ENCODE measurements at regions of chr5 and their contacts with region 1.

Region 1: DNA sequence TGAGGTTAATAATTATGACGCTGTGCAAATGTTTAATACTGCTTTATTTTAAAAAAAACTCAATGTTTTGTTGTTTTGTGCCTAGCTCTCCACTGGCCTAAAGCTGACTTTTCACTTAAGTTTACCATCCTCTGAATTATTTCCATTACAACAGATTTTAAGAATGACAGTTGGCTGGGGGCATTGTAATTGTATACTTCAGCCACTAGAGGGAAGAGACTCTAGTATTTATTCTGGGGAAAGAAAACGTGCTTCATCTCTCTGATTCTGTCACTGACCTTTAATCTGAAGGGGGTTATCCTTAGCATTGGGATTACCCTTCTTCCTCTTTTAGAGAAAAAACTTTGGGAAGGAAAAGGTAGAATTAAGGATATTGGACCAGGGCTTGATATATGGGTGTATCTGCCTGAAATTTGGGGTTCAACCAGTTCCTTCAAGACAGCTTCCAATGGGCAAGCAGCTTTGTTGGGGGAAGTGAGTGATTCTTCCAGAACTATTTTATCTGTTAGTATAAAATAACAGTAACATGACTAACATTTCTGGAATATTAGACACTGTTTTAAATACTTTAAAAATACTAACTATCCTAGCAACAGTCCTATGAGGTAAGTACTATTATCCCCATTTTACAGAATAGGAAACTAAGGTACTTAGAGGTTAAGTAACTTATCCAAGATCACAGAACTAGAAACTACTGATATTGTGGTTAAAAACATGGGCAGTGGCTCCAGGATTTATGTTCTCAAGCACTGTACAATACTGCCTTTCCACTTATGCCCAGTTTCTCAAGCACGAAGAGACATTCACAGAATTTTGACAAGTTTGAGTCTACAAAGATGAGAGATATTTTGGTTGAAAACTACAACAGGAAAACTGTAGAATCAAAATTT is 208.4 kb downstream of the CD180 start:
- DNase-seq: peak; percentile 53
- H3K4me3 ChIP-seq: no peak overlapping the region
- H3K27ac ChIP-seq: no peak overlapping the region
- H3K4me1 ChIP-seq: no peaks in the 10 kb centered on the region
- H3K27me3 ChIP-seq: no peaks in the 10 kb centered on the region
- CTCF ChIP-seq: peak; percentile 54 to 61
- POLR2A ChIP-seq: no peak

Region 2: GRCh38 chr5:66807743-66808142 is 180.5 kb before region 1 on chr5:
- CTCF ChIA-PET with region 1: interaction called, 4 read pairs
- POLR2A ChIA-PET with region 1: no interaction called
- dilution Hi-C with region 1: no loop called
- intact Hi-C with region 1: loop called (anchors 5 kb)
- DNase-seq: peak; percentile 75
- H3K4me3 ChIP-seq: no peak overlapping the region
- H3K27ac ChIP-seq: no peak overlapping the region
- H3K4me1 ChIP-seq: no peaks in the 10 kb centered on the region
- H3K27me3 ChIP-seq: peaks cover 9 to 10% of the 10 kb centered on the region in 2 experiments
- CTCF ChIP-seq: peak; percentile 62 to 69
- POLR2A ChIP-seq: no peak

Region 3: DNA sequence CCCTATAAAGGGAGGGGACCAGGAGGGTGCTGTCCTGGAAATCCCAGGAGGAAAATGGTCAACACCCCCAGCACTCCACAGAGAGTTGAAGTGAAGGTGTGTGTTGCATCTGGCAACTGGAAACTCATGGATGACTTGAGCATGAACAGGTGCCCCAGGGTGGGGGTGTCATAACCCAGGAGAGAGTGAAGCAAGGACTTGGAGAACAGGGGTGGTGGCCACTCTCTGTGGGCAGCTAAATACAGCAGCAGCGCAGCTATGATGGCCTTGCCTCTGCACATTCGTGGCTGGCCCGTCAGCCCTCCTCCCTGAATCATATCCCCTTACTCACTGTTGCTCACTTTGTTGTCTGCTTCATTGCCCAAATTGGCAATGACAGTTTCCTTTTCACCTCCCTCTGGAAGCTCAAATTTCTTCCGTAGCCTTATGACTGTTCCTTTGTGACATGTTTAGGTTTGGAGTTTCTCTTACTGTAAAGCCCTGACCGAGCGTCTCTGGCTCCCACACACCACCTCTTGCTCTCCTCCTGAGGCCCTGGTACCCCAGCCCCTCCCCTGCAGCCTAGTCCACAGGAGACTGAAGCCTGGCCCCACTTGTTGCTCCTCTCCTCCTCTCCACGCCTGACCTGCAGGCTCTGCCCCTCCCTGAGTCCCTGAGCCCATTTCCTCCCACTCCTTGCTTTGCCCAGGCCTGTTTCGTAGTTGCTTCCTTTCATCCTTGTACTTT is 22.7 kb after region 1 on chr5:
- CTCF ChIA-PET with region 1: interaction called, 15 read pairs
- POLR2A ChIA-PET with region 1: no interaction called
- dilution Hi-C with region 1: no loop called
- intact Hi-C with region 1: no loop called
- DNase-seq: peak; percentile 96
- H3K4me3 ChIP-seq: peak overlapping the region in 1 of 3 experiments; percentile 1
- H3K27ac ChIP-seq: peak overlapping the region; percentile 96
- H3K4me1 ChIP-seq: peaks cover 88% of the 10 kb centered on the region
- H3K27me3 ChIP-seq: no peaks in the 10 kb centered on the region
- CTCF ChIP-seq: no peak
- POLR2A ChIP-seq: peak; percentile 94

Region 4: GRCh38 chr5:67065237-67065636 is 77.0 kb after region 1 on chr5:
- CTCF ChIA-PET with region 1: interaction called, 12 read pairs
- POLR2A ChIA-PET with region 1: no interaction called
- dilution Hi-C with region 1: no loop called
- intact Hi-C with region 1: no loop called
- DNase-seq: no peak
- H3K4me3 ChIP-seq: no peak overlapping the region
- H3K27ac ChIP-seq: no peak overlapping the region
- H3K4me1 ChIP-seq: peaks cover 45% of the 10 kb centered on the region
- H3K27me3 ChIP-seq: no peaks in the 10 kb centered on the region
- CTCF ChIP-seq: no peak
- POLR2A ChIP-seq: no peak

Region 5: DNA sequence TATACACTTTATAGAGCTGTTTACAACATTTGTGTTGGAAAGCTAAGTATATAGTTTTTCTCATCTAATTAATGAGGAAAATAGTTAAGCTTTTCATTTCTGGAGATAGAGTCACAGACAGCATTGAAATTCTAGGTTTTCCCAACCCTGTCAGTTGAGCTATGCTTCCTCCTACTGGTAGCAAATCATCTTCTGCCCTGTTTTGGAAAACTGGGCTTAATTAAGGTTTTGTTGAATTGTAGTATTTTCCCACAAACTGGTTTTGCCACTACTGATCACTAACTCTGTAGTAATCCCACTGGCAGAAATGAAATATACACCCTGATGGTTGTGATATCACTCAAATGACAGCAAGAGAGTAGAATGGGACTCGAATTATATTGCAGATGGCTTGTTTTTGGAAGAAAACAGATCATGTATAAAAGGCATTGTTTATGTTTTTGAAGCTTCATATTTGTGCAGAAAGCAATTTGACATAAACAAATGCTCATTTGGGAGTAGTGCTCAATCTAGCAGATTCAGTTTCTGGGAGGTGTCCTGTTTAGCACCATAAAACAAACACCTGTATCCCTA is 161.8 kb after region 1 on chr5:
- CTCF ChIA-PET with region 1: interaction called, 21 read pairs
- POLR2A ChIA-PET with region 1: no interaction called
- dilution Hi-C with region 1: no loop called
- intact Hi-C with region 1: no loop called
- DNase-seq: no peak
- H3K4me3 ChIP-seq: no peak overlapping the region
- H3K27ac ChIP-seq: no peak overlapping the region
- H3K4me1 ChIP-seq: no peaks in the 10 kb centered on the region
- H3K27me3 ChIP-seq: no peaks in the 10 kb centered on the region
- CTCF ChIP-seq: no peak
- POLR2A ChIP-seq: no peak